ENCODE measurements at regions of chr4 and their contacts with region 1.

Region 1: GRCh38 chr4:123986268-123986798 is 589.7 kb downstream of the SPRY1 start:
- DNase-seq: peak; percentile 19 to 74
- ATAC-seq: peak; percentile 69 to 95 (median 86)
- H3K4me3 ChIP-seq: no peak overlapping the region
- H3K27ac ChIP-seq: peak overlapping the region; percentile 45 to 79 (median 72)
- H3K4me1 ChIP-seq: peaks cover 0 to 31% (median 24%) of the 10 kb centered on the region in 9 donors
- H3K27me3 ChIP-seq: no peaks in the 10 kb centered on the region
- CTCF ChIP-seq: no peak

Region 2: DNA sequence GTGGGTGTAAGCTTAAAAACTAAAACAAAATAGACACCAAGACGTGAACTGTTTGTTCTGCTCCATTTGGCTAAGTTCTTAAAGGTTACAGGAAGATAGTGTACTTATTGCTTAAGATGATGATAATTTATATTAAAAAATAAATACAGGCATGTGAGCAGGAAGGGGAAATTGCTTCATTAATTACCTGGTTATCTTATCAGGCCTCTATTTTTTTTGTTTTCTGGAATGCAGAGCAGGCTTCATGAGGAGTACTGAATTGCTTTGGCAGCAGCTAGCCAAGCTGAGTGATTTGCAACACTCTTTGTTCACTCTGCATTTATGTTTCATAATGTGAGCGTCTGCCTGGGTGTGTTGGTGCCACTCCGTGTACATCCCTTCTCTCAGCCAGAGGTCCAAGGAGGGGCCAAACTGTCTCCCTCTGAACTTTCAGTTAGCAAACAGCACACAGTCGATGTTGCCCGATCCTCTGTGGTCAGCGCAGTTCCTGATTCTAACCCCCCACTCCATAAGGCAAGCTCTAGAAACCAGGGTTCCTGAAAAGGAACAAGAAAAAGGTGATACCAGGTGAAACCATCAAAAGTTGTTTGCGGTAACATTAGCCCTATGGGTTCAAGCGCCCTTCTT is 241.6 kb before region 1 on chr4:
- intact Hi-C with region 1: loop called in 1 of 10 experiments (anchors 10 kb)
- DNase-seq: no peak
- ATAC-seq: peak in 6 of 8 donors; percentile 32 to 72 (median 64)
- H3K4me3 ChIP-seq: no peak overlapping the region
- H3K27ac ChIP-seq: peak overlapping the region; percentile 7 to 73 (median 55)
- H3K4me1 ChIP-seq: peaks cover 8 to 52% (median 25%) of the 10 kb centered on the region in 9 donors
- H3K27me3 ChIP-seq: no peaks in the 10 kb centered on the region
- CTCF ChIP-seq: no peak

Region 3: DNA sequence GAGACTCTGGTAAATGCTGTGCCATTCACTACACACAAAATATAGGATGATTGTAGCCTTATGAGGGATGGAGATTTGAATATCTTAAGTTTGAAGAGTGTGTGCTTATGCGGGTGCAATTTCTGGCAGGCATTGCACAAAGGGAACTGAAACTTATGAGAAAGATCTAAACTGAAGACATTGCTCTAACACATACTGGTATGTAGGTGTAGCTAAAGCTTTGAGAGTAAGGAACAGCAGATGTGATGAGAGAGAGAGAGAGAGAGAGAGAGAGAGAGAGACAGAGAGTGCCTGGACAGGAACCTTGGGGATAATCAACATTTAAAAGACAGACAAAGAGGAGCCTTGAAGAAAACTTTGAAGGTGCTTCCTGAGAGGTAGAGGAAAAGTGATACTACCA is 210.1 kb before region 1 on chr4:
- intact Hi-C with region 1: loop called in 2 of 10 experiments (anchors 10 kb)
- DNase-seq: no peak
- ATAC-seq: no peak
- H3K4me3 ChIP-seq: no peak overlapping the region
- H3K27ac ChIP-seq: peak overlapping the region in 3 of 10 donors; percentile 41 to 66 (median 65)
- H3K4me1 ChIP-seq: peaks cover 0 to 22% (median 8%) of the 10 kb centered on the region in 9 donors
- H3K27me3 ChIP-seq: no peaks in the 10 kb centered on the region
- CTCF ChIP-seq: no peak

Region 4: GRCh38 chr4:123785538-123785937 is 200.8 kb before region 1 on chr4:
- intact Hi-C with region 1: loop called in 1 of 10 experiments (anchors 10 kb)
- DNase-seq: peak; percentile 24 to 40
- ATAC-seq: peak; percentile 68 to 92 (median 72)
- H3K4me3 ChIP-seq: no peak overlapping the region
- H3K27ac ChIP-seq: peak overlapping the region in 9 of 10 donors; percentile 28 to 86 (median 72)
- H3K4me1 ChIP-seq: peaks cover 0 to 47% (median 31%) of the 10 kb centered on the region in 9 donors
- H3K27me3 ChIP-seq: no peaks in the 10 kb centered on the region
- CTCF ChIP-seq: no peak

Region 5: DNA sequence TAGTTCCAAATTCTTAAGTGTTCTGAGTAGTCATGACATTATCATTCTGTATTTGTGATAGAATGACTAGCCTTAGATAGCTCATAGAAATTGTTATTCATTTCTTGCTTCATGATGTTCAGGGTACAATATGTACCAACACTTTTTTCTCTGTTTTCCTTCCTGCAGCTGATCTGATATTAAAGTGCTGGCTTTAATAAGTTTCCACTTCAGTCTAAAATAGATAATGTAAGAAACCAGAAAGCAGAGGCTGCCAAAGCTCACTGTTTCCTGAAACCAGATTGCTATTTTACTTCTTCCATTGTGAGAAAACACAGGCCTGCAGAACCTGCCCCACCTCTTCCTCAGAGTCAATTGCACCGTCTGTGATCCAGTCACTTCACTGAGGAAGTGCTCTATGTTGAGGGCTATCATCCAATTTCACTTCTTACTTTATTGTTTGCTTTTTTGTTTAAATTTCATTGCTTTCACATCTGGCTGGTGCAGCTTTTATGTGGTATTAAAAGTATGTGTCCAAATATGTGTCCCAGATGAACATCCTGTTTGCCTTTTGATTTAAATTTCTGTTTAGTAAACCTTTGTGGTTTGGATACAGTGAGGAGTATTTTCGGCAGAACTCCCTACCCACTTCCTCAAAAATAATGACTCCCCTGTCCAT is 74.1 kb after region 1 on chr4:
- intact Hi-C with region 1: loop called in 3 of 10 experiments (anchors 5 to 10 kb)
- DNase-seq: peak; percentile 13 to 73
- ATAC-seq: peak; percentile 76 to 97 (median 94)
- H3K4me3 ChIP-seq: no peak overlapping the region
- H3K27ac ChIP-seq: peak overlapping the region; percentile 57 to 93 (median 76)
- H3K4me1 ChIP-seq: peaks cover 0 to 44% (median 28%) of the 10 kb centered on the region in 9 donors
- H3K27me3 ChIP-seq: no peaks in the 10 kb centered on the region
- CTCF ChIP-seq: no peak

Region 6: DNA sequence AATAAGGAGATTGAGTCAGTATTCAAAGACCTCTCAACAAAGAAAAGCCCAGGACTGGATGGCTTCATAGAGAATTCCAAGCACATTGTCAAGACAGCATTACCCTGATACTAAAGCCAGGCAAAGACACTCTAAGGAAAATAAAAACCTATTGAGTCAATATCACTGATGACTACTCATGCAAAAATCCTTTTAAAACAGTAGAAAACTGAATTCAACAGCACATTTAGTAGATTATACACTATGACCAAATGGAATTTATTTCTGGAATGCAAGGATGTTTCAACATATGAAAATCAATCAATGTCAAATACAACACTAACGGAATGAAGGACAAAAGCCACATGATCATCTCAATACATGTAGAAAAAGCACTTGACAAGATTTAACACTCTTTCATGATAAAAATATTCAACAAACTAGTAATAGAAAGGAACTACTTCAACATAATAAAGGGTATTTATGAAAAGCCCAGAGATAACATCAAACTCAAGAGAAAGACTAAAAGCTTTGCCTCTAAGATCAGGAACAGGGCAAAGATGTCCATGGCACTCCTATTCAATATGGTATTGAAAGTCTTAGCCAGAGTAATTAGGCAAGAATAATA is 92.9 kb after region 1 on chr4:
- intact Hi-C with region 1: no loop called
- DNase-seq: no peak
- ATAC-seq: no peak
- H3K4me3 ChIP-seq: no peak overlapping the region
- H3K27ac ChIP-seq: no peak overlapping the region
- H3K4me1 ChIP-seq: no peaks in the 10 kb centered on the region
- H3K27me3 ChIP-seq: no peaks in the 10 kb centered on the region
- CTCF ChIP-seq: no peak

Region 7: GRCh38 chr4:124135409-124135813 is 149.1 kb after region 1 on chr4:
- intact Hi-C with region 1: no loop called
- DNase-seq: no peak
- ATAC-seq: no peak
- H3K4me3 ChIP-seq: no peak overlapping the region
- H3K27ac ChIP-seq: no peak overlapping the region
- H3K4me1 ChIP-seq: no peaks in the 10 kb centered on the region
- H3K27me3 ChIP-seq: no peaks in the 10 kb centered on the region
- CTCF ChIP-seq: no peak

Measured in heart right ventricle (tissue), 16 donors.